Naive thymus-derived CD4-positive, alpha-beta T cell (primary cell): ENCODE measurements at regions of chr14 and their contacts with region 1.

Region 1: GRCh38 chr14:93137864-93138263 is 22.1 kb upstream of the ITPK1 start:
- DNase-seq: no peak
- ATAC-seq: no peak
- H3K4me3 ChIP-seq: no peak overlapping the region
- H3K4me3 Mint-ChIP-seq: no peak overlapping the region
- H3K27ac ChIP-seq: no peak overlapping the region
- H3K27ac Mint-ChIP-seq: no peak overlapping the region
- H3K4me1 ChIP-seq: no peaks in the 10 kb centered on the region
- H3K4me1 Mint-ChIP-seq: peaks cover 2 to 6% (median 4%) of the 10 kb centered on the region in 7 donors
- H3K27me3 ChIP-seq: no peaks in the 10 kb centered on the region
- H3K27me3 Mint-ChIP-seq: no peaks in the 10 kb centered on the region

Region 2: GRCh38 chr14:92185559-92185958 is 952.3 kb before region 1 on chr14:
- CTCF ChIA-PET with region 1: no interaction called
- POLR2A ChIA-PET with region 1: no interaction called
- intact Hi-C with region 1: no loop called
- DNase-seq: no peak
- ATAC-seq: no peak
- H3K4me3 ChIP-seq: no peak overlapping the region
- H3K4me3 Mint-ChIP-seq: no peak overlapping the region
- H3K27ac ChIP-seq: no peak overlapping the region
- H3K27ac Mint-ChIP-seq: peak overlapping the region in 1 of 9 donors; percentile 34
- H3K4me1 ChIP-seq: no peaks in the 10 kb centered on the region
- H3K4me1 Mint-ChIP-seq: no peaks in the 10 kb centered on the region
- H3K27me3 ChIP-seq: no peaks in the 10 kb centered on the region
- H3K27me3 Mint-ChIP-seq: no peaks in the 10 kb centered on the region

Region 3: GRCh38 chr14:93068711-93069110 is 69.2 kb before region 1 on chr14:
- CTCF ChIA-PET with region 1: no interaction called
- POLR2A ChIA-PET with region 1: no interaction called
- intact Hi-C with region 1: no loop called
- DNase-seq: no peak
- ATAC-seq: no peak
- H3K4me3 ChIP-seq: no peak overlapping the region
- H3K4me3 Mint-ChIP-seq: no peak overlapping the region
- H3K27ac ChIP-seq: no peak overlapping the region
- H3K27ac Mint-ChIP-seq: peak overlapping the region in 2 of 9 donors; percentile 16 to 65
- H3K4me1 ChIP-seq: peaks cover 11 to 21% of the 10 kb centered on the region in 2 donors
- H3K4me1 Mint-ChIP-seq: peaks cover 42 to 56% (median 45%) of the 10 kb centered on the region in 7 donors
- H3K27me3 ChIP-seq: no peaks in the 10 kb centered on the region
- H3K27me3 Mint-ChIP-seq: no peaks in the 10 kb centered on the region

Region 4: DNA sequence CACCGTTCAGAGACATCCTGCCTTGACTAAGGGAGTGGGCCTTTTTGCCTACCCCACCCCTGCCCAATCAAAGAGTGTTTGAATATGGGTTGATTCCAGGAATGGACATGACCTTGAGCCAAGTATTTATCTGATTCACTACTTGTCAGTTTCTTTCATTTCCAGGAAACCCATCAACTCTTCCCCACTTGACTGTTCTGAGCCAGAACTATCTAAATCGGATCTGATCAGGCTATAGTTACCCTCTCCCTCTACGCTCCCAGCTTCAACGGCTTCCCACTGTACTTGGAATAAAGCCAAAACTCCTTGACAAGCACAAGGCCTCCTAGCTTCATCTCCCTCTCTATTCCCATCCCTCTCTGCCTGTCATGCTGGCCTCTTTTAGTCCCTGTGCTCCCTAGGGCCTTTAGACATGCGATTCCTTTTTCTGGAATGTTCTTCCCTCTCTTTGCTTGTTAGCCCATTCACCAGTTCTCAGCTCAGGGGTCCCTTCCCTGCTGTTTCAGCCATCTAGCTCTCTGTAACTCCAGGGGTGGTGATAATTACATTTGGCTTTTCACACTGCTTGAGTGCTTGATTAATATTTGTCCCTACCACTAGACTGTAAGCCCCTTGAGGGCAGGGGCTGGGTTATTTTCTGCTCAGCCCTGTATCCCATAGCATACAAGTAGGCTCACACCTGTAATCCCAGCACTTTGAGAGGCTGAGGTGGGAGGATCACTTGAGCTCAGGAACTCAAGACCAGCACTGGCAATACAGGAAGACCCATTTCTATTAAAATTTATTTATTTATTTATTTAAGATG is 16.6 kb before region 1 on chr14:
- CTCF ChIA-PET with region 1: no interaction called
- POLR2A ChIA-PET with region 1: no interaction called
- intact Hi-C with region 1: no loop called
- DNase-seq: no peak
- ATAC-seq: no peak
- H3K4me3 ChIP-seq: no peak overlapping the region
- H3K4me3 Mint-ChIP-seq: no peak overlapping the region
- H3K27ac ChIP-seq: no peak overlapping the region
- H3K27ac Mint-ChIP-seq: peak overlapping the region in 1 of 9 donors; percentile 20
- H3K4me1 ChIP-seq: peaks cover 4 to 5% of the 10 kb centered on the region in 2 donors
- H3K4me1 Mint-ChIP-seq: peaks cover 0 to 13% (median 6%) of the 10 kb centered on the region in 7 donors
- H3K27me3 ChIP-seq: no peaks in the 10 kb centered on the region
- H3K27me3 Mint-ChIP-seq: peaks cover 0 to 4% (median 0%) of the 10 kb centered on the region in 5 donors

Region 5: DNA sequence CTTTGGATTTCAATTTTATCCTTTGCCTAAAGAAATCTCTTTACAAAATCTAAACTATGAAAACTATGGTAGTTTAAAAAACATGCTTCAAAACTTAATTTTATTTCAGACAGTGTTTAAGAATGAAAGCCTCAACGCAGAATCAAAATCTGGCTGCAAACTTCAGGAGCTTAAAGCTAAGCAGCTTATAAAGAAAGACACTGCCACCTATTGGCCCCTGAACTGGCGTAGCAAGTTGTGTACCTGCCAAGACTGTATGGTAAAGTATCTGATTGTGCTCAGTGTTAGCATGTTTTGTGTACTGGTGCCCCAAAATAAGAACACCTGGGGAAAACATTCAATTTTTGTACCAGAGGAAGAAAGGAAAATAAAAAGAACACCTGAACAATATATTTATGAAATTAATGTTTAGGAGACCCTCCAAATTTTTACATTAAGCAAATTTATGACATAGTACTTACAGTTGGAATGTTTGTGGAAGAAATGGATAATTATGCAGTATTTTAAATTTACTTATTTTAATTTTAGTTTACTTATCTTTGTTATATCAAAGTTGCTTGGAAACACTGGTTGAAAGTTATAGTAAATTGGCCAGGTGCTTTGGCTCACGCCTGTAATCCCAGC is 81.4 kb after region 1 on chr14:
- CTCF ChIA-PET with region 1: interaction called, 6 read pairs
- POLR2A ChIA-PET with region 1: no interaction called
- intact Hi-C with region 1: loop called (anchors 1 kb)
- DNase-seq: peak in 7 of 9 donors; percentile 27 to 66 (median 56)
- ATAC-seq: peak; percentile 87
- H3K4me3 ChIP-seq: no peak overlapping the region
- H3K4me3 Mint-ChIP-seq: no peak overlapping the region
- H3K27ac ChIP-seq: no peak overlapping the region
- H3K27ac Mint-ChIP-seq: no peak overlapping the region
- H3K4me1 ChIP-seq: no peaks in the 10 kb centered on the region
- H3K4me1 Mint-ChIP-seq: peaks cover 0 to 4% (median 0%) of the 10 kb centered on the region in 7 donors
- H3K27me3 ChIP-seq: no peaks in the 10 kb centered on the region
- H3K27me3 Mint-ChIP-seq: no peaks in the 10 kb centered on the region

Region 6: DNA sequence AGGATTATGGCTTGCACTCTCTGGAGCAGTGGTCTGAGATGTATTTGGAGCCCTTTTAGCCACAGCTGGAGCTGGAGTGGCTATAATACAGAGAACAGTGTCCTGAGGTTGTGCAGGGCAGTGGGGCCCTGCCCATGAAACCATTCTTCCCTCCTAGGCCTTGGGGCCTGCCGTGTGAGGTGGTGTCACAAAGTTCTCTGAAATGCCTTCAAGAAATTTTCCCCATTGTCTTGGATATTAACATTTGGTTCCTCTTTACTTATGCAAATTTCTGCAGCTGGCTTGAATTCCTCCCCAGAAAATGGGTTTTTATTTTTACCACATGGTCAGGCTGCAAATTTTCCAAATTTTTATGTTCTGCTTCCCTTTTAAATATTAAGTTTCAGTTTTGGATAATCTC is 372.2 kb after region 1 on chr14:
- CTCF ChIA-PET with region 1: no interaction called
- POLR2A ChIA-PET with region 1: no interaction called
- intact Hi-C with region 1: no loop called
- DNase-seq: no peak
- ATAC-seq: no peak
- H3K4me3 ChIP-seq: no peak overlapping the region
- H3K4me3 Mint-ChIP-seq: no peak overlapping the region
- H3K27ac ChIP-seq: no peak overlapping the region
- H3K27ac Mint-ChIP-seq: no peak overlapping the region
- H3K4me1 ChIP-seq: no peaks in the 10 kb centered on the region
- H3K4me1 Mint-ChIP-seq: no peaks in the 10 kb centered on the region
- H3K27me3 ChIP-seq: no peaks in the 10 kb centered on the region
- H3K27me3 Mint-ChIP-seq: peaks cover 15 to 48% (median 38%) of the 10 kb centered on the region in 5 donors